Panc1 (cell line): ENCODE measurements at regions of chr1 and their contacts with region 1.

Region 1: DNA sequence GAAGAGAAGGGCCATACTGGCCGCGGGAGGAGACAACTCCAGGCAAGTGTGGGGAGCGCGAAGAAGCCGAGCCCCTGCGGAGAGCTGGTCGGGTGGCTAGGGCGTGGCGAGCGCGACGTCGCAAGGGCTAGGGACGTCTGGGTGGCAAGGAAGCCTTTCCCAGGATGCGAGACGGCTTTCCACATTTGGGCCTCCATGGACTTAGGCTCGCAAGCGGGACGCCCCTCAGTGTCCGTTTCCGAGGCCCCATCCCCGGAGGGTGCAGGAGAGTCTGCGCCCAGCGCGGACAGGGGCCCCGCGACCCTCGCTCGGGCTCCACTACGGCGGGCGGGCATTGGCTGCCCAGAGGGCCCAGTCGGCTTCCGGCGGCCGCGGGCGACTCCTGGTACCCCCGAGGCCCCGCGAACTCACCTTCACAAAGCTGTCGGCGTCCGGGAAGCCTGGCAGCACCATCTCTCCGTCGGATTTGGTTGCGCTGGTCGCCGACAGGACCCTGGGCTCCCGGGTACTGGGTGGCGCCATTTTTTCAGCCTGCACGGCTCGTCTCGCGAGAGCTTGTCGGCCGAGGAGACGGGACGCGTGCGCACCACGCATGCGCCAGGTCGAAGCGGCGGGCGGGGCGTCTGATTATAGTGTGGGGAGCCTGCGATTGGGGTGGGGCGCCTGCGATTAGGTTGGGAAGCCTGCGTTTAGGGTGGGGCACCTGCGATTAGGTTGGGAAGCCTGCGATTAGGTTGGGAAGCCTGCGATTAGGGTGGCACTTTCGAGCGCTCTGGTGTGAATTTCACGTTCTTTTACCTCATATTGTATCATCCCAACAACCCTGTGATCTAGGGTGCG is at the start of gene EXOSC10:
- DNase-seq: peak; percentile 48
- ATAC-seq: peak; percentile 96
- H3K4me3 ChIP-seq: peak within 1 kb of the TSS; percentile 82
- H3K27ac ChIP-seq: peak within 1 kb of the TSS; percentile 97
- H3K4me1 ChIP-seq: peaks cover 7% of the 10 kb centered on the region
- H3K27me3 ChIP-seq: no peaks in the 10 kb centered on the region
- CTCF ChIP-seq: no peak
- total RNA-seq, gene EXOSC10: 93.1 TPM

Region 2: GRCh38 chr1:10161541-10162290 is 937.8 kb before region 1 on chr1:
- CTCF ChIA-PET with region 1: no interaction called
- POLR2A ChIA-PET with region 1: no interaction called
- in situ Hi-C with region 1: no loop called
- intact Hi-C with region 1: no loop called
- DNase-seq: no peak
- ATAC-seq: no peak
- H3K4me3 ChIP-seq: no peak overlapping the region
- H3K27ac ChIP-seq: no peak overlapping the region
- H3K4me1 ChIP-seq: no peaks in the 10 kb centered on the region
- H3K27me3 ChIP-seq: no peaks in the 10 kb centered on the region
- CTCF ChIP-seq: no peak

Region 3: DNA sequence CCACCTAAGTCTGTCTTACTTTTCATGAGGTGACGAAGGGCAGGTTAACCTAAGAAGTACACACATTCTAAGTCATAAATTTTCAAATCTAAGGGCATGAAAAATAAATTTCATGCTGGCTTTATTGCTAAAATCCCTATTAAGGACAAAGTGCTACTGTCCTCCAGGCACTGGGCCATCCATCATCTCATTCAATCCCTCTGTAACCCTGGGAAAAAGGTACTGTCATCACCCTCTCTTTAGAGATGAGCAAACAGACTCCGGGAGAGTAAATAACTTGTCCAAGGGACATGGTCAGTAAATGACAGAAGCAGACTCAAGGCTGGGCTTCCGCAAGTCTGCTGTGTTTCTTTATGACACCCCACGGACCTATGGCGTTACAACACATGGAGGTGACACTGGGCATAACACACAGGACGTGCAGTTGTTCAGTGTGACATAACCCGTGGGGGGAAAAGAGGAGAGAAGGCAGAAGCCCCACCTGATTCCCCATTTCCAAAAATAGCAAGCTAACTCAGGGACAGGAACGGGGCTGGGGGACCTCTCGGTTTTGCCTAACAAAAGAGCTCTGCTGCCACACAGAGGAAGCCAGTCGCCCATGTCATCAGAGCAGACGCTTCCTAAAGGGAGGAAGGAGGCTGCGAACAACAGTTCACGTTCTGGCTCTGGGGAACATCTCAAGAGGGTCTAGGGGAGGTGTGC is 27.2 kb before region 1 on chr1:
- CTCF ChIA-PET with region 1: no interaction called
- POLR2A ChIA-PET with region 1: interaction called, 22 read pairs
- in situ Hi-C with region 1: no loop called
- intact Hi-C with region 1: no loop called
- DNase-seq: no peak
- ATAC-seq: no peak
- H3K4me3 ChIP-seq: no peak overlapping the region
- H3K27ac ChIP-seq: no peak overlapping the region
- H3K4me1 ChIP-seq: no peaks in the 10 kb centered on the region
- H3K27me3 ChIP-seq: no peaks in the 10 kb centered on the region
- CTCF ChIP-seq: no peak

Region 4: DNA sequence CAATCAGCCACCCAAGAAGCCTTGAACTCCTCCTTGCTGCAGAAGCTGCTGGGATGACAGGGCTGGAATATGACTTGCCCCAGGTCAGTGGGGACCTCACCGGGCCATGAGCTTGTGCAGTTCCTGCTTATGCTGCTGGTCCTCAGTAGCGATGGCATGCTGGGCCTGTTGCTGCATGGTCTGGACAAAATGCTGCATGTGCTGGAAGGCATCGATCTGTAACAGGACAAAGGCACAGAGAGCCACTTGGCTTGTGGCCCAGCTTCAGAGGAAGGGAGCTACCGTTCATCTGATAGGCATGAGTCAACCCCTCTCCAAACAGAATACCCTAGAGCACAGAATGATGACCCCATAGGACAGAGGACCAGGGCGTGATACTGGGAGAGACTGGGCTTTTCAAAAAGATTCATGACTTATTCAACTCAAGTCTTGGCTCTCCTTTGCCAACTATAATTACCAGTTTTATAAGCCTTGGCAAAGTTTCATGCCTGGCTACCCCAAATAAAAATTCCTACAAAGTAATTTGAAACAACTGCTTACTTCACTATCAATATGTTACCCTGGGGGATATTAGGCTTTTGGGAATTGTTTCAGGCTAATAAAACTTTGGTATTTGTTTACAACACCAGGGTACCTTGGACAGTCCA is 34.8 kb after region 1 on chr1:
- CTCF ChIA-PET with region 1: interaction called, 4 read pairs
- POLR2A ChIA-PET with region 1: no interaction called
- in situ Hi-C with region 1: loop called (anchors 5 kb)
- intact Hi-C with region 1: no loop called
- DNase-seq: no peak
- ATAC-seq: peak; percentile 93
- H3K4me3 ChIP-seq: no peak overlapping the region
- H3K27ac ChIP-seq: peak overlapping the region; percentile 92
- H3K4me1 ChIP-seq: peaks cover 29% of the 10 kb centered on the region
- H3K27me3 ChIP-seq: no peaks in the 10 kb centered on the region
- CTCF ChIP-seq: no peak